Naive thymus-derived CD4-positive, alpha-beta T cell (primary cell): ENCODE measurements at regions of chr15 and their contacts with region 1.

Region 1: DNA sequence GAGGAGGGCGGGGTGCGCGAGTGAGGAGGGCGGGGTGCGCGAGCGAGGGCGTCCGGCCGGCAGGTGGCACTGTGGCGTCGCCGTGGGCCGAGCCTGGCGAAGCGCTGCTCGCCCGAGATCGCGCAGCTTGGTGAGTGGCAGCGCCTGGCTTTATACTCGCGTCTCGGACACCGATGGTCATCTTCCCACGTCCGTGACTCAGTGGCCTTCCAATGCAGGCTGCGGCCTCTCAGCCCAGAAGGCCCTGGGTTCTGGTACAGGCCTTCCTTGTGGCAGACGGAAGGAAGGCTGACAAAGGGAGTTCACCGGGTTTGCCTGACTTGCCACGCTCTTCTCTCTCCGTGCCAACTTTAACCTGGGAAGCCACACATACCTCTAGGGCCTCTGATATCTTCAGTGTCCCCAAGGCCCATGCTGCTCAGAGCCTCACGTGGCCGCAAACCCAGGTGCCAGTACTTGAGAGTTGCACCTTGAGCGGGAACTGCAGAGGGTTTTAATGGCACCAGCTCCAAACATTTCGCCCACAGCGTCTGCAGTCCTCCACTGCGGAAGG is 195.3 kb upstream of the LYSMD4 start:
- DNase-seq: peak; percentile 68 to 93 (median 91)
- ATAC-seq: peak; percentile 97
- H3K4me3 ChIP-seq: peak overlapping the region; percentile 56
- H3K4me3 Mint-ChIP-seq: peak overlapping the region; percentile 79 to 92 (median 88)
- H3K27ac ChIP-seq: peak overlapping the region; percentile 76
- H3K27ac Mint-ChIP-seq: peak overlapping the region; percentile 80 to 95 (median 89)
- H3K4me1 ChIP-seq: peaks cover 12 to 17% of the 10 kb centered on the region in 2 donors
- H3K4me1 Mint-ChIP-seq: peaks cover 13 to 28% (median 19%) of the 10 kb centered on the region in 7 donors
- H3K27me3 ChIP-seq: no peaks in the 10 kb centered on the region
- H3K27me3 Mint-ChIP-seq: peaks cover 0 to 27% (median 0%) of the 10 kb centered on the region in 5 donors

Region 2: GRCh38 chr15:97960364-97961066 is 1968.0 kb before region 1 on chr15 and contains the start of gene ARRDC4:
- CTCF ChIA-PET with region 1: no interaction called
- POLR2A ChIA-PET with region 1: no interaction called
- intact Hi-C with region 1: loop called (anchors 10 kb)
- DNase-seq: peak; percentile 85 to 100 (median 100)
- ATAC-seq: peak; percentile 97
- H3K4me3 ChIP-seq: peak within 1 kb of the TSS; percentile 45
- H3K4me3 Mint-ChIP-seq: peak within 1 kb of the TSS; percentile 78 to 93 (median 86)
- H3K27ac ChIP-seq: peak within 1 kb of the TSS; percentile 79
- H3K27ac Mint-ChIP-seq: peak within 1 kb of the TSS; percentile 71 to 98 (median 88)
- H3K4me1 ChIP-seq: peaks cover 0 to 13% of the 10 kb centered on the region in 2 donors
- H3K4me1 Mint-ChIP-seq: peaks cover 14 to 41% (median 21%) of the 10 kb centered on the region in 7 donors
- H3K27me3 ChIP-seq: no peaks in the 10 kb centered on the region
- H3K27me3 Mint-ChIP-seq: peaks cover 0 to 40% (median 0%) of the 10 kb centered on the region in 5 donors
- total RNA-seq, gene ARRDC4: 0.59 to 6.8 (median 1.1) TPM

Region 3: GRCh38 chr15:99733268-99734039 is 195.1 kb before region 1 on chr15 and contains the start of gene LYSMD4:
- CTCF ChIA-PET with region 1: no interaction called
- POLR2A ChIA-PET with region 1: interaction called, 7 read pairs
- intact Hi-C with region 1: loop called (anchors 2 kb)
- DNase-seq: peak; percentile 93 to 98 (median 96)
- ATAC-seq: peak; percentile 100
- H3K4me3 ChIP-seq: peak within 1 kb of the TSS; percentile 70
- H3K4me3 Mint-ChIP-seq: peak within 1 kb of the TSS; percentile 81 to 92 (median 88)
- H3K27ac ChIP-seq: peak within 1 kb of the TSS; percentile 84
- H3K27ac Mint-ChIP-seq: peak within 1 kb of the TSS; percentile 82 to 97 (median 95)
- H3K4me1 ChIP-seq: peaks cover 10 to 13% of the 10 kb centered on the region in 2 donors
- H3K4me1 Mint-ChIP-seq: peaks cover 5 to 36% (median 27%) of the 10 kb centered on the region in 7 donors
- H3K27me3 ChIP-seq: no peaks in the 10 kb centered on the region
- H3K27me3 Mint-ChIP-seq: no peaks in the 10 kb centered on the region
- total RNA-seq, gene LYSMD4: 7.9 to 22.4 (median 15.4) TPM

Region 4: DNA sequence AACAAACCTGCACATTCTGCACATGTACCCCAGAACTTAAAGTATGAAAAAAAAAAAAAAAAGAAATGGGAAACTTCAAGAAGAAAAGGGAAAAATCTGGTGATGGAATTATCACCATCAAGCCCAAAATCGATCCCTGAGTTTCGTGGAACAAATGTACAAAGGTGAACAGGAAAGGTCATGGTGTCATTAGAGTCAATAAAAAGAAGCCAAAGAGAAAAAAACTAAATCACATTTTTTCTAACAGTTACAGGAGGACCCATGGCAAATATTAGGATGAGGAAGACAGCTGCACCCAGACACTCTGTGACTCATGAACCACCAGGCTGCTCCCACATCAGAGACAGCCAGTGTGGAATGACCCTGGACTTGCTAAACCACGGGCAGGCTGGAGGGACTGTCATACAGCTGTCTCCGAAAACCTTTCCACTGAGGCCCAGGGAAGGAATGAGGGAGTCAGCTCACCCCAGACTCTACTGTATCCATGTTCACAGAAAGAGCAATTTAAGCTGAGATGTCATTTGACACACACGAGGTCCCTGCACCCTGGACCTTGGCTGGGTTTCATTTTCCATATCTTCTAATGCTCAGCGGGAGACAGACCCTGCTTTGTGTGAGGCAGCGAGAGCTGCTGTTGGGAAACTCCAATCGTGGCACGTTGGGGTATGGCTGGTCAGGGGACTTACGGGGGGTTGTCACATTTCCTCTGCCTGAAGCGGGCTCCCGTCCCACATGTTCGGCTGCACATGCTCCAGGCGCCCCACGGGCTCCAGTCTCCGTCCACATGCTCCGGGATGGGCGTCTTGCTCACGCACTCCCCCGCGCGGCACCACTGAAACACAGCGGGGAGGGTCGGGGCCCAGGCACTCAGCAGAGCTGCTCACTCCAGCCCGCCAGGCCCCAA is 203.1 kb after region 1 on chr15:
- CTCF ChIA-PET with region 1: no interaction called
- POLR2A ChIA-PET with region 1: no interaction called
- intact Hi-C with region 1: loop called in 1 of 2 experiments (anchors 2 kb)
- DNase-seq: peak in 4 of 9 donors; percentile 7 to 38 (median 18)
- ATAC-seq: peak; percentile 53
- H3K4me3 ChIP-seq: no peak overlapping the region
- H3K4me3 Mint-ChIP-seq: peak overlapping the region in 7 of 10 donors; percentile 33 to 73 (median 56)
- H3K27ac ChIP-seq: no peak overlapping the region
- H3K27ac Mint-ChIP-seq: no peak overlapping the region
- H3K4me1 ChIP-seq: no peaks in the 10 kb centered on the region
- H3K4me1 Mint-ChIP-seq: no peaks in the 10 kb centered on the region
- H3K27me3 ChIP-seq: no peaks in the 10 kb centered on the region
- H3K27me3 Mint-ChIP-seq: no peaks in the 10 kb centered on the region

Region 5: DNA sequence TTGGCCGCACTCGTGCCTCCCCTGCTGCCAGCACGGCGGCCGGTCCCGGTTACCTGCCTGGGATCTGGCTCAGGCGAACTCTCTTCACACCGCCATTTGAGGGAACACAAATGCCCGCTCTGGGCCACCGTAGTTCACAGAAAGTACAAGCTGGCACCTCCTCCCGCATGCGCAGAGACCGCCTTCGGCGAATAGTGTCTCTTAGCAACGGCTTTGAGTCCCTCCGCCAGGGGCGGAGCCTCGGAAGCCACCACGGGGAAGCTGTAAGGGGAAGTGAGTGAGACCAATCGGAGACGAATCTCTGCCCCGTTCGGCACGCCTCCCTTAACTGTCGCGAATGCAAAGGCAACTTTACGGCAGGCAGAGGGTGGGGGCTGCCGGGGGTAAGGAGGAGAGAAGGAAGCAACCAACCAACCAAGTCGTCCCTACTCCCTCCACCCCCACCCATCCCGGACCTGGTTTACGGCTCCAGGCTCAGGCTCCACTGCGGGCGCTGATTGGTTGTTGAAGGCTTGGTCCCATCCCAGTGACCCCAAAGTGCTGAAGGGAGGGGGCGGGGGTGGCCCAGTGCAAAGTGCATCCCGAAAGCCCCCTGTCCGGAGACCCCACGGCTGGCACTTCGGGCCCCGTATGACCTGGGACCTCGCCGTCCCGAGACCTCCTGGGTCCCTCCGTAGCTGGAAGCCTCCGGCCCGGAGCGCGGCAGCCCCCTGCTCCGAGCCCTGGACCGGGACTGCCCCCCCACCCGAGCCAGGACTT is 673.7 kb after region 1 on chr15 and contains the starts of genes ASB7 and LINS1:
- CTCF ChIA-PET with region 1: no interaction called
- POLR2A ChIA-PET with region 1: interaction called, 8 read pairs
- intact Hi-C with region 1: loop called (anchors 2 kb)
- DNase-seq: peak; percentile 97 to 100 (median 100)
- ATAC-seq: peak; percentile 97
- H3K4me3 ChIP-seq: peak within 1 kb of the TSS; percentile 97
- H3K4me3 Mint-ChIP-seq: no peak within 1 kb of the TSS
- H3K27ac ChIP-seq: peak within 1 kb of the TSS; percentile 91
- H3K27ac Mint-ChIP-seq: peak within 1 kb of the TSS in 6 of 9 donors; percentile 50 to 95 (median 85)
- H3K4me1 ChIP-seq: peaks cover 35 to 52% of the 10 kb centered on the region in 2 donors
- H3K4me1 Mint-ChIP-seq: peaks cover 32 to 68% (median 41%) of the 10 kb centered on the region in 7 donors
- H3K27me3 ChIP-seq: no peaks in the 10 kb centered on the region
- H3K27me3 Mint-ChIP-seq: no peaks in the 10 kb centered on the region
- total RNA-seq, gene ASB7: 15.4 to 27.2 (median 18.9) TPM
- total RNA-seq, gene LINS1: 50.7 to 116 (median 76.9) TPM

Region 6: DNA sequence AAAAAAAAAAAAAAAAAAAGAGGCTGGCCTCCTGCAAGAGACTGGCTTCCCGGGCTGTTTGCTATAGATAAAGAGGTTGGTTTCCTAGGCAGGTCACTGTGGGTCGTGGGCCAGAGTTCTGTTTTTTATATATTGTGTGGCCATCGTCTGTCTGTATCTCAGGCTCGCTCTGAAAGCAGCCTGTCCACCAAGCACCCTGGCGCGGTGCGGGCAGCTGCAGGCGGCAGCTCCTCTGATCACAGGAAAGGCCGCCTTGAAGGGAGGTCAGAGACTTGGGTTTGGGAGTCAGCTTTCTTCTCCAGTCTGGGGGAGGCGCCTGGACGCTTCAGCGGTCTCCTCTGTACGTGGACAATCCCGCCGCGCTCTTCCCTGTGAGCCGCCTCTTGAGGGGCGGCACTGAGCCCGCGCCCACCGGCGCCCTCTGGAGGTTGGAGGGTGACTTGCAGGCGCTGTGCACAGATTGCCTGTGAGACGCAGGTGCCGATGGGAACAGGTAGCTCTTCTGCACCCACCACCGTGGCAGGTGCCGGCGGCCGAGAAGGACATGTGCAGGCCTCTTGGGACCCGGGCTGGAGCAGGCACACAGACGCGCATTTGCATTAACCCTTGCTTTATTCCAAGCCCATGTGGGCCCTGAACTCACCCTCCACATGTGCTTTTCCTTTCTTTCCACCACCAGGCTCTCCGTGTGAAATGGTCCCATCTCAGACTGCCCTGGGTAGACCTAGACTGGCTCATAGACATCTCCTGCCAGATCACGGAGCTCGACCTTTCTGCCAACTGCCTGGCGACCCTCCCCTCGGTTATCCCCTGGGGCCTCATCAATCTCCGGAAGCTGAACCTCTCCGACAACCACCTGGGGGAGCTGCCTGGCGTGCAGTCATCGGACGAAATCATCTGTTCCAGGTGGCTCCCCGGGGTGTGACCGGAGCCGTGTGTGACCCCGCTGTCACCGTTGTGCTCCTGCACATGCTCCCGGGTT is 1079.9 kb after region 1 on chr15:
- CTCF ChIA-PET with region 1: no interaction called
- POLR2A ChIA-PET with region 1: no interaction called
- intact Hi-C with region 1: loop called (anchors 2 kb)
- DNase-seq: peak; percentile 67 to 92 (median 85)
- ATAC-seq: peak; percentile 97
- H3K4me3 ChIP-seq: peak overlapping the region; percentile 77
- H3K4me3 Mint-ChIP-seq: peak overlapping the region; percentile 84 to 96 (median 90)
- H3K27ac ChIP-seq: no peak overlapping the region
- H3K27ac Mint-ChIP-seq: peak overlapping the region in 3 of 9 donors; percentile 63 to 75 (median 68)
- H3K4me1 ChIP-seq: peaks cover 8 to 9% of the 10 kb centered on the region in 2 donors
- H3K4me1 Mint-ChIP-seq: peaks cover 9 to 25% (median 23%) of the 10 kb centered on the region in 7 donors
- H3K27me3 ChIP-seq: no peaks in the 10 kb centered on the region
- H3K27me3 Mint-ChIP-seq: peaks cover 0 to 29% (median 0%) of the 10 kb centered on the region in 5 donors

Region 7: DNA sequence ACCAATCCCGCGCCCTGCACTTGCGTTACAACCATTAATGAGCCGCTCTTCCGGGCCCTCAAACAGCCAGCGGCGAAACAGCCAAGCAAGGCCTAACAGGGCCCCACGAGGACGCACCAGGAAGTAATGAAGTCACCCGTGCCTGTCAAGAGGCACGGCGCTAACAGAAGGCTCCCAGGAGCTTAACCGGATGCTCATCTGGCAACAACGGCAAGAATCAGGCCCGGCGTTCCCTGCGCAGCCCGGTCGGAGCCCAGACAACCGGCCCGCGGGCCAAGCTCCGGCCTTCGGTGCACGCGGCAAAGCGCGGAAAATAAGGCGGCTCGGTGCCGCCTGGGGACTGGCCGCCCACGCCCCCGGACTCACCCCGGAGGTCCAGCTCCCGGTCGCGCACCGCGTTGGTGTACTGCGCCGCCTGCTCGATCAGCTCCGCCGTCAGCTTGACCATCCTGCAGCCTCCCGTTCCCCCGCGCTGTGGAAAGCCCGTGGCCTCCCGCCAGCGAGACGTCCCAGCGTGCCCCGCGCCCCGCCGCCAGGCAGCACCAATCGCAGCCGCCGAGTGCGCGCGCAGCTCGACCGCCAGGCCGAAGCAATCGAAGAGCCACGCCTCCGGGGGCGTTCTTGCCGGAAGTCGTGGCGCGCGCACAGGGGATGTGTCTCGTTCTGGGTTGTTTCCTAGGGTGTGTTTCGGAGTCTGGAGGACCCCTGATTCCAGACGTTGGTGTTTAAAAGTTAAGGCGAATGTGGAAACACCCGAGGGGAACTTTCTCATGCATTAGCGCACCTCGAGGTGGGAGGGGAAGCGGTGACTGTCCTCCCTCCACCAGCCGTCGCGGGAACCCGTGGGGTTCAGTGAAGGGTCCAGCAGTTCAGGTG is 1366.5 kb after region 1 on chr15 and contains the start of gene SNRPA1:
- CTCF ChIA-PET with region 1: no interaction called
- POLR2A ChIA-PET with region 1: no interaction called
- intact Hi-C with region 1: loop called in 1 of 2 experiments (anchors 10 kb)
- DNase-seq: peak; percentile 92 to 99 (median 96)
- ATAC-seq: peak; percentile 94
- H3K4me3 ChIP-seq: peak within 1 kb of the TSS; percentile 76
- H3K4me3 Mint-ChIP-seq: peak within 1 kb of the TSS; percentile 90 to 99 (median 97)
- H3K27ac ChIP-seq: peak within 1 kb of the TSS; percentile 95
- H3K27ac Mint-ChIP-seq: peak within 1 kb of the TSS; percentile 89 to 99 (median 96)
- H3K4me1 ChIP-seq: peaks cover 14 to 27% of the 10 kb centered on the region in 2 donors
- H3K4me1 Mint-ChIP-seq: peaks cover 27 to 58% (median 47%) of the 10 kb centered on the region in 7 donors
- H3K27me3 ChIP-seq: no peaks in the 10 kb centered on the region
- H3K27me3 Mint-ChIP-seq: no peaks in the 10 kb centered on the region
- total RNA-seq, gene SNRPA1: 80.1 to 212 (median 110) TPM